Astrocyte of the cerebellum (primary cell): ENCODE measurements at regions of chr15 and their contacts with region 1.

Region 1: GRCh38 chr15:39195988-39196486 is 384.8 kb upstream of the THBS1 start:
- DNase-seq: peak; percentile 19
- H3K4me3 ChIP-seq: no peak overlapping the region
- CTCF ChIP-seq: no peak

Region 2: DNA sequence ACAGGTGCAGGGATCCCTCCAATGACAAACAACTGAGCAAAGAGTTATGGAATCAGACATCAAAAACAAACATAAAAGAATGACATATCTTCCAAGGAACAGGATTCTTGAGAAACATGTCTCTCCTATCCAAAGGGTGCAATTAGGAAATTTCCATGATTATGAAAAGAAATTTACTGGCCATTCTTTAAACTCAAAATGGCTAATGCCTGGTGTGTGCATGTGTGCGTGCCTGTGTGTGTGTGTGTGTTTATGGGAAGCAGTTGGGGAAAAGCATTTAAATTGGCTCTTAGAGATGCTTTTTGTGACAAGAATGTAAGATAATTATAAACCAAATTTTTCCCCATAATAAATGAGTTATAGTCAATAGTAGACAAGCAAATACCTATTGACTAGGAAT is 64.4 kb after region 1 on chr15:
- in situ Hi-C with region 1: loop called (anchors 5 kb)
- DNase-seq: no peak
- H3K4me3 ChIP-seq: no peak overlapping the region
- CTCF ChIP-seq: no peak

Region 3: GRCh38 chr15:39555885-39556284 is 359.8 kb after region 1 on chr15:
- in situ Hi-C with region 1: loop called (anchors 5 kb)
- DNase-seq: no peak
- H3K4me3 ChIP-seq: no peak overlapping the region
- CTCF ChIP-seq: no peak